ENCODE measurements at regions of chr1 and their contacts with region 1.

Region 1: DNA sequence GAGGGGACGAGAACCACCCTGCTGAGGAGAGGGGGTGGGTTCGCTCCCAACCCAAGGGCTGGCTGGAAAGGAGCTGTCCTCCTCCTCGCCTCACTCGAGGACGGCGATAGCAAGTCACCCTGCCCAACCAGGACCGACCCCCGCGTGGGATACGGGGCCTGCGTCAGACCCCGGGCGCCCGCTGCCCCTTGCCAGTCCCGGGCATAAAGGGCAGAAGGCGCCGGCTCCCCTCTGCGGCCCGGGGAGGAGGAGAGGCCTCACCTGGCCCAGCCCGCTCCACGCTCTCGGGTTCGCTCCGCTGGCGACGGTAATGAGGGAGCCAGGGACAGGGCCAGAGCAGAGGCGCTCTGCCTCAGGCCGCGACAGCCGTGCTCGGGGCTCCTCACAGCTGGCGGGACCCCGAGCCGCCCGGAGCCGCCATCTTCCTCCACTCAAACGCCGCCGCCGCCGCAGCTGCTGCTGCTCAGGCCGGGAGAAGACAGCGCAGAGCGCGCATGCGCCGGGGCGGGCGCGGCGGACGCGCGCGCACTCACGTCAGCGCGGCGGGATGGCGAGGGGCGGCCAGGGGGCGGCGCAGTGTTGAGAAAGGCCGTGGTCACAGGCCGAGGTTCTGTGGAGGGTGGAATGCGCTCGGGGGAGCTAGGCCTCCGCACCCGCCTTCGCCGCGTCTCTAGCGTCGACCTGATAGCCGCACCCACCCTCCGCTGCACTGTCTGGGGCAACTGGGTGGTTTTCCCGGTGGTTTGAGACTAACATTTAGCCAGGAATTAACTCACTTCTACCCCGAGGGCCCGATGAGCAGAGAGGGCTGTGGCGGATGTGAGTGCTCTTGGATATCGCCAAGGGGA is at the start of gene FBXO42:
- DNase-seq: peak; percentile 92
- ATAC-seq: peak; percentile 79
- H3K4me3 ChIP-seq: peak within 1 kb of the TSS; percentile 79
- H3K27ac ChIP-seq: peak within 1 kb of the TSS; percentile 65
- H3K4me1 ChIP-seq: peaks cover 34% of the 10 kb centered on the region
- H3K27me3 ChIP-seq: no peaks in the 10 kb centered on the region
- CTCF ChIP-seq: peak; percentile 53
- total RNA-seq, gene FBXO42: 13.1 and 16.0 TPM in 2 replicates

Region 2: DNA sequence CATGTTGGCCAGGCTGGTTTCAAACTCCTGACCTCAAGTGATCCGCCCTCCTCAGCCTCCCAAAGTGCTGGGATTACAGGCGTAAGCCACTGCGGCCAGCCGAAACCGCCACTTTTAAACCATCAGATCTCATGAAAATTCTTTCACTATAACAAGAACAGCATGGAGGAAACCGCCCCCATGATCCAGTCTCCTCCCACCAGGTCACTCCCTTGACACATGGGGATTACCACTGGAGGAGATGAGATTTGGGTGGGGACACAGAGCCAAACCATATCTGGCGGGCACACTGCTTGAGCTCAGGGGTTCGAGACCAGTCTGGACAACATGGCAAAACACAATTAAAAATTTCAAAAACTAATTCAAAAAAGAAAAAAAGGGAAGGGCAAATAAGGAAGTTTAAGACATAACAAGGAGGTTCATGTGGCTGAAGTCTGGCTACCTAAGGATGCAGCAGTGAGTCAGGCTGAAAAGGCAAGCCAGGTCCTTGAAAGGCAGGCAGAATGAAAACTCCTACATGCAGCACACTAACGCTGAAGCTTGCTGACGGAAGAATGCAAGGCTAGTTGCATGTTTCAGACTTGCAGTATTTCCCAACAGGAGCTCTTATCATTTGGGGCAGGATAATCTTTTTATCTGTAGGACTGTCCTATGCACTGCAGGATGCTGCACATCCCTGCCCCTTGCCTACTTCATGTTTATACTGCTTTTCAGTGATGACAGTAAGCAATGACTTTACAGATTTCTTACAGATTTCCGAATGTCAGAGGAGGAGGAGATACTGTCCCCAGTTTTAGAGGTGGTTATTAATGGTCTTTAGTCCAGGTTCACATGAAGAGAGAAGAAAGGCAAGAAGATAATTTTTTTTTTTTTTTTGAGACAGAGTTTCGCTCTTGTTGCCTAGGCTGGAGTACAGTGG is 49.2 kb before region 1 on chr1:
- CTCF ChIA-PET with region 1: no interaction called
- POLR2A ChIA-PET with region 1: no interaction called
- intact Hi-C with region 1: no loop called
- DNase-seq: no peak
- ATAC-seq: no peak
- H3K4me3 ChIP-seq: no peak overlapping the region
- H3K27ac ChIP-seq: no peak overlapping the region
- H3K4me1 ChIP-seq: no peaks in the 10 kb centered on the region
- H3K27me3 ChIP-seq: no peaks in the 10 kb centered on the region
- CTCF ChIP-seq: no peak

Region 3: DNA sequence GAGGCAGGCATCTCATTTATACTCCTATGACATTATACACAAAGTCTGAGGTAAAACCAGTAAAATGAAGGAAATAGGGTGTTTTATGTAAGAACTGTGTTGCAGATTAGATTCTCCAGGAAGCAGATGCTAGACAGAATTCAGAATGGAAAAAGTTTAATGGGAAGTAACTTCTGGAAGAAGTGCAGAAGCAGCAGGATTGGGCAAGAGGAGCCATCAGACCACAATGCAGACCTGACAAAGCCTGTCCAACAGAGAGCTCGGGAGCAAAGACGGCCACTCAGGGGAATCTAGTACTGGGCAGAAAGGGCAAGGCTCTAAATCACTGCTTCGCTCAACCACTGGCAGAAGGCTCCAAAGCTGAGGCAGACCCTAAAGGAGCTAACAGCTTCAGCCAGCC is 33.7 kb before region 1 on chr1:
- CTCF ChIA-PET with region 1: interaction called, 14 read pairs
- POLR2A ChIA-PET with region 1: no interaction called
- intact Hi-C with region 1: no loop called
- DNase-seq: no peak
- ATAC-seq: no peak
- H3K4me3 ChIP-seq: no peak overlapping the region
- H3K27ac ChIP-seq: no peak overlapping the region
- H3K4me1 ChIP-seq: no peaks in the 10 kb centered on the region
- H3K27me3 ChIP-seq: no peaks in the 10 kb centered on the region
- CTCF ChIP-seq: no peak

Region 4: DNA sequence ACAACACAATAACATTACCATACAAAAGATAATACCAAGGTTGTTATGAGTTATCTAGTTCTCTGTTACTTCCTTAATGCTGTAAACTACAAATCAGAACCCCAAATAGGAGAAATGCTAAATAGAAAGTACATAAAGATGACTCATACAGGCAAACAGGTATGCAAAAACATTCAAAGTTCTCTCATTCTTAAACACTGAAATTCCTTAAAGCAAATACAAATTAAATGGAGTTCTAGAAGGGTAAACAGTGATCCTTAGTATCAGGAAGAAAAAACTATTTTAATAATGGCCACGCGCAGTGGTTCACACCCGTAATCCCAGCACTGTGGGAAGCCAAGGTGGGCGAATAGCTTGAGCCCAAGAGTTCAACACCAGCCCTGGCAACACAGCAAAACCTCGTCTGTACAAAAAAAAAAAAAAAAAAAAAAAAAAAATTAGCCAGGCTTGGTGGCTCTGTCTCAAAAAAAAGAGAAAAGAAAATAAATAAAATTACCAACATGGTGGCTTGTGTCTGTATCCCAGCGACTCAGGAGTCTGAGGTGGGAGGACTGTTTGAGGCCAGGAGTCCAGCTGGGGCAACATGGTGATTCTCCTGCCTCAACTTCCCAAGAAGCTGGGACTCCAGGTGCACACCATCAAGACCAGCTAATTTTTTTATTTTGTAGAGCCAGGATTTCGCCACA is 17.4 kb before region 1 on chr1:
- CTCF ChIA-PET with region 1: no interaction called
- POLR2A ChIA-PET with region 1: no interaction called
- intact Hi-C with region 1: no loop called
- DNase-seq: peak; percentile 58
- ATAC-seq: peak; percentile 89
- H3K4me3 ChIP-seq: peak overlapping the region; percentile 38
- H3K27ac ChIP-seq: peak overlapping the region; percentile 62
- H3K4me1 ChIP-seq: peaks cover 14% of the 10 kb centered on the region
- H3K27me3 ChIP-seq: no peaks in the 10 kb centered on the region
- CTCF ChIP-seq: no peak

Region 5: GRCh38 chr1:16396591-16396990 is 44.4 kb after region 1 on chr1:
- CTCF ChIA-PET with region 1: no interaction called
- POLR2A ChIA-PET with region 1: no interaction called
- intact Hi-C with region 1: no loop called
- DNase-seq: peak; percentile 28
- ATAC-seq: peak; percentile 84
- H3K4me3 ChIP-seq: no peak overlapping the region
- H3K27ac ChIP-seq: no peak overlapping the region
- H3K4me1 ChIP-seq: no peaks in the 10 kb centered on the region
- H3K27me3 ChIP-seq: no peaks in the 10 kb centered on the region
- CTCF ChIP-seq: no peak

Measured in PC-3 (cell line).